Mammary epithelial cell (primary cell): ENCODE measurements at regions of chr15 and their contacts with region 1.

Region 1: DNA sequence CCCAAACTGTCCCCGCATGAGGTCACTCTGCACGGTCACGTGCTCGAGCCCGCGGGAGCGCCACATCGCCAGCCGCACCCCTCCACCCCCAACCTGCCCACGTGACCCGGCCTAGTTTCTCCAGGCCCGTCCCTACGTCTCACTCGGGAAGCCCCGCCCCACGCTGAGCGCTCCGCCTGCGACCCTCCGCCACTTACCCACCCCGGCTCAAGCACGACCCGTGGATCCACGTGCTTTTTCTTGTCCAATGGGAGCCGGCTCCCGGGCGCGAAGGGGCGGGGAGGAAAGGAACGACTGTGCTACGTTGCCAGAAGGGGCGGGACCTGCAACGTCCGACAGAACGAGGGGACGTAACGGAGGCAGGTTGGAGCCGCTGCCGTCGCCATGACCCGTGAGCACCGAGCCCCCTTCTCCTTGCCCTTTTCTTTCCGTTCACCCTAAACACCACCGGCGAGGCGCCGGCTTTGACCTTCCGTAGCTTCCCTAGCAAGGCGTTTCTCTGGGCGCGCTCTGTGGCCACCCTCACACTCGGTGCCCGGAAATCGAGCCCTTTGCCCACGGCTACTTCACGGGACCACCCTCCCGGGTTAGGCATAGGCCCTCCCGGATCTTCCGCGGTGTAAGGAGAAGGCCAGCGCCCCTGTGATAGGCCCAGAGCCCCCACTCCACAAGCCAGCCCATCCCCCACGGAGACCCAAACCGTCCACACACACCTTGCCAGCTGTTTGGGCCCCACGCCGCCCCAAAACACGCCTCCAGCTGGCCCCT is at the start of gene SERF2:
- DNase-seq: peak; percentile 99
- H3K4me3 ChIP-seq: peak within 1 kb of the TSS; percentile 88 to 100 (median 88)
- H3K27ac ChIP-seq: peak within 1 kb of the TSS; percentile 93
- H3K4me1 ChIP-seq: peaks cover 6% of the 10 kb centered on the region
- H3K27me3 ChIP-seq: no peaks in the 10 kb centered on the region
- CTCF ChIP-seq: no peak
- total RNA-seq, gene SERF2: 191 to 636 TPM

Region 2: GRCh38 chr15:43749690-43750345 is 42.4 kb before region 1 on chr15:
- CTCF ChIA-PET with region 1: no interaction called
- dilution Hi-C with region 1: loop called (anchors 5 kb)
- in situ Hi-C with region 1: no loop called
- intact Hi-C with region 1: no loop called
- DNase-seq: no peak
- H3K4me3 ChIP-seq: peak overlapping the region in 1 of 3 experiments; percentile 16
- H3K27ac ChIP-seq: peak overlapping the region; percentile 15
- H3K4me1 ChIP-seq: peaks cover 24% of the 10 kb centered on the region
- H3K27me3 ChIP-seq: no peaks in the 10 kb centered on the region
- CTCF ChIP-seq: no peak